Sigmoid colon (tissue), 7 donors: ENCODE measurements at regions of chr10 and their contacts with region 1.

Region 1: DNA sequence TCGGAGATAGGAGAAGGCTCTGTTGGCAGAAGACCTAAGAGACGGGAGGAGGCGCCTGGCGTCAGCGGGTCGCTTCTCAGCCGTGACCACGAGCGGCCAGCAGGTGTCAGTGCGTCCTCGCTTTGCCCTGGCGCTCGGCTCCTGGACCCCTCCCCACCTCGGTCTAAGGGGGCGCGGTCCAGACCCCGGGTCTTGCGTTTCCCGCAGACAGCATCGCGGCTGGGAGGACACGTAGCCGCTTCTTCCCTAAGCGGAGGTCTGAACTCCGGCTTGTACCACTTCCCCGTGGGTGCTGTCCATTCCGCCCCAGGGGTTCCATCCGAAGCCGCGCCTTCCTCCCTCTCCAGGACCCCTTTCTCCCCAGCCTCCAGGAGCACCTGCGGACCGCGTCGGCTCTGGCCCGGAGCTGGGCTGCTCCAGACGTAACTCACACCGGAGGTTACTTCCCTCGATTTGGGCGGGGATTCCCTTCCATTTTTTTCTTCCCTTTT is 593 bp upstream of the ADRA2A start:
- DNase-seq: peak; percentile 80
- H3K4me3 ChIP-seq: peak overlapping the region; percentile 22 to 52 (median 46)
- H3K27ac ChIP-seq: peak overlapping the region in 1 of 4 donors; percentile 7
- H3K4me1 ChIP-seq: peaks cover 0 to 32% (median 30%) of the 10 kb centered on the region in 4 donors
- H3K27me3 ChIP-seq: peaks cover 37 to 93% (median 50%) of the 10 kb centered on the region in 3 donors
- CTCF ChIP-seq: peak; percentile 34 to 80 (median 68)
- EP300 ChIP-seq: no peak
- POLR2A ChIP-seq: no peak

Region 2: DNA sequence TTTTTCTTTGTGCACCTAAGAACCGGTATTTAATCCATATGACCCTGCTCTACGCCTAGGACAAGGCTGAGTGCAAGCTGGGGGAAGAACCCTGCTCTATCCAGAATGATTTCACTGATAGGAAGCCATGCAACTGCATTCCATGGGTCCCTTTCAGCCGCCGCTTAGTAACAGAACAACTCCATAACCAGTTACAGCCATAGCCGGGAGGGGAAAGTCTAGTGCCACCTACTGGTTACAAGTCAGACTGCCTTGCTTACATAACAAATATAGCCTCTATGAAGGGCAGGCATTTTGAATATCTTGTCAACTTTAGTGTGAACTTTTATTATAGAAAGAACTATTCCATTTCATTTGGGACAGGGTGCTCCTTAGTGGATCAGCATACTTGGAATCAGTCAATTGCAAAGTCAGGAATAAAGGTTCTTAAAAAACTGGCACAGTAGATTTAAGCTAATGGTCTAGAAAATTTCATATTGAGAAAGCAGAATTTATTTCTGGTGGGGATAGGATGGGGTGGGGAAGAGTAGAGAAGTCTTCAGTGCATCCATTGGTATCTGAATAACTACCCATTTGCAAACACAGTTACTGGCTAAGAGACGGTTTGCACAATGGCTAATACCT is 522.3 kb after region 1 on chr10:
- intact Hi-C with region 1: loop called (anchors 5 kb)
- DNase-seq: peak; percentile 69
- H3K4me3 ChIP-seq: no peak overlapping the region
- H3K27ac ChIP-seq: no peak overlapping the region
- H3K4me1 ChIP-seq: no peaks in the 10 kb centered on the region
- H3K27me3 ChIP-seq: no peaks in the 10 kb centered on the region
- CTCF ChIP-seq: peak; percentile 7 to 62 (median 46)
- EP300 ChIP-seq: no peak
- POLR2A ChIP-seq: no peak

Region 3: GRCh38 chr10:112140110-112140970 is 1064.1 kb after region 1 on chr10:
- intact Hi-C with region 1: loop called (anchors 2 kb)
- DNase-seq: peak; percentile 73
- H3K4me3 ChIP-seq: no peak overlapping the region
- H3K27ac ChIP-seq: no peak overlapping the region
- H3K4me1 ChIP-seq: no peaks in the 10 kb centered on the region
- H3K27me3 ChIP-seq: no peaks in the 10 kb centered on the region
- CTCF ChIP-seq: peak; percentile 29 to 87 (median 71)
- EP300 ChIP-seq: no peak
- POLR2A ChIP-seq: no peak